ENCODE measurements at regions of chr16 and their contacts with region 1.

Region 1: GRCh38 chr16:81204798-81205680 is 33.5 kb upstream of the BCO1 start:
- DNase-seq: peak; percentile 26
- H3K27ac ChIP-seq: no peak overlapping the region
- CTCF ChIP-seq: peak; percentile 78

Region 2: GRCh38 chr16:80369138-80369958 is 835.7 kb before region 1 on chr16:
- CTCF ChIA-PET with region 1: no interaction called
- POLR2A ChIA-PET with region 1: no interaction called
- DNase-seq: peak; percentile 42
- H3K27ac ChIP-seq: no peak overlapping the region
- CTCF ChIP-seq: peak; percentile 51

Region 3: GRCh38 chr16:81189100-81189664 is 15.9 kb before region 1 on chr16:
- CTCF ChIA-PET with region 1: interaction called, 11 read pairs
- POLR2A ChIA-PET with region 1: no interaction called
- DNase-seq: no peak
- H3K27ac ChIP-seq: no peak overlapping the region
- CTCF ChIP-seq: no peak

Region 4: GRCh38 chr16:81251871-81252270 is 46.8 kb after region 1 on chr16:
- CTCF ChIA-PET with region 1: no interaction called
- POLR2A ChIA-PET with region 1: no interaction called
- DNase-seq: no peak
- H3K27ac ChIP-seq: no peak overlapping the region
- CTCF ChIP-seq: no peak